Right cardiac atrium (tissue), 5 donors: ENCODE measurements at regions of chr1 and their contacts with region 1.

Region 1: GRCh38 chr1:45512641-45513054 is 9.0 kb downstream of the PRDX1 start:
- DNase-seq: peak in 2 of 3 donors; percentile 51 to 67
- ATAC-seq: peak; percentile 44 to 55
- H3K4me3 ChIP-seq: no peak overlapping the region
- H3K27ac ChIP-seq: no peak overlapping the region
- H3K4me1 ChIP-seq: no peaks in the 10 kb centered on the region
- H3K27me3 ChIP-seq: no peaks in the 10 kb centered on the region

Region 2: DNA sequence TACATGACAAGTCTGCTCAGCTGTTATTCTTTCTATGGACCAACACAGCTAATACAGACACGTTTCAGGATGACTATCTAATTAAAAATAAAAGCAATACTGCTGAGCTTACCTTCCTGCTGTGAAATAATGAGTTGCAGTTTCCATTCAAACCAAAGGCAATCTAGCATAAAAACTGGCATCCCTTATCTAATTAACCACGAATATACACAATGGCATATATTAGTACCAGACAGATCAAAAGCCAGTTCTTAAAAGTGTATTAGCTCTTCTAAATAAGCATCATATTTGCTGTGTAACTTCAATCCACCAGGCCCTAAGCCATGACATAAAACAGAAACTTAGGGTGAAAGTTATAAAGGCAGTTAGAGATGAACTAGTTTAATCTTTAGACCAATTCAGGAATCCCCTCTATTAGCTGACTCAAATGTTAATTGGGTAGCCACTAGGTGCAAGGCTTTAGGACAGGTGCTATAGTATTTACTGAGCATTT is 42.3 kb before region 1 on chr1:
- intact Hi-C with region 1: no loop called
- DNase-seq: no peak
- ATAC-seq: no peak
- H3K4me3 ChIP-seq: no peak overlapping the region
- H3K27ac ChIP-seq: no peak overlapping the region
- H3K4me1 ChIP-seq: no peaks in the 10 kb centered on the region
- H3K27me3 ChIP-seq: no peaks in the 10 kb centered on the region

Region 3: GRCh38 chr1:45557422-45557944 is 44.8 kb after region 1 on chr1:
- intact Hi-C with region 1: loop called in 2 of 4 experiments (anchors 5 to 10 kb)
- DNase-seq: no peak
- ATAC-seq: no peak
- H3K4me3 ChIP-seq: no peak overlapping the region
- H3K27ac ChIP-seq: no peak overlapping the region
- H3K4me1 ChIP-seq: no peaks in the 10 kb centered on the region
- H3K27me3 ChIP-seq: no peaks in the 10 kb centered on the region